Activated CD8-positive, alpha-beta T cell treated with anti-CD3 and anti-CD28 coated beads for 36 hours (primary cell): ENCODE measurements at regions of chr17 and their contacts with region 1.

Region 1: GRCh38 chr17:40909351-40909750 is 24.3 kb upstream of the KRT20 start:
- DNase-seq: peak; percentile 82
- ATAC-seq: peak; percentile 94
- H3K4me3 Mint-ChIP-seq: no peak overlapping the region
- H3K27ac Mint-ChIP-seq: no peak overlapping the region
- H3K4me1 Mint-ChIP-seq: no peaks in the 10 kb centered on the region
- H3K27me3 Mint-ChIP-seq: peaks cover 23% of the 10 kb centered on the region
- CTCF ChIP-seq: peak; percentile 80

Region 2: DNA sequence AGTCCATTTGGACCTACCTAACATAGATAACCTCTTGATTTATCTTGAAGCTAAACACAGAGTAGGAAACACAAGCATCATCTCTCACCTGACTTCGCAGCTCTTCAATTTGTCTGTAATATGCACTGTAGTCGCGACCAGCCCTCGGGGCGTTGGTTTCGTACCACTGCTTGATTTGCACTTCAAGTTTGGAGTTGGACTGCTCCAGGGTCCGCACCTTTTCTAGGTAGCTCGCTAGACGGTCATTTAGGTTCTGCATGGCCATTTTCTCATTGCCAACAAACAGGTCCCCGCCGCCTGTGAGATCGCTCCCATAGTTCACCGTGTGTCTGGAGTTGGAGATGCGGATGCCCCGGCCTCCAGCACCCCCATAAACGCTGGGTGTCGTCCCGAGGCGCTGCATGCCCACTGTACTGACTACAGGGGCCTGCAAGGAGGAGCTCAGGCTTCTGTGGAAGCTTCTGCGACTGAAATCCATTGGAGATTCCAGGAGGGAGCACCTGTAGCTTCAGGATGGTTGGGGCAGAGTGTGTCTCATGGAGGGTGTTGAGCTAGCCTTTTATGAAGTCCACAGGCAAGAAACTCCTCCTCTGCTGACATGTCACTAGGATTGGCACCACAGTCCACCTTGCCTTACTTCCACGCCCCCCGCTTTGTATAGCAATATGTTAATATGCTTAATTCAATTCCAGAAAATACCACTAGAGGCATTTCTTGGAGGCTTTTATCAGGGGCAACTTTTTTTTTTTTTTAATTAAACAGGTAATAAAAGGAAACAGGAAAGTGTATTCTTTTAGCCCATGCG is 24.4 kb before region 1 on chr17 and contains the start of gene KRT20:
- CTCF ChIA-PET with region 1: no interaction called
- POLR2A ChIA-PET with region 1: no interaction called
- intact Hi-C with region 1: no loop called
- DNase-seq: no peak
- ATAC-seq: no peak
- H3K4me3 Mint-ChIP-seq: no peak within 1 kb of the TSS
- H3K27ac Mint-ChIP-seq: no peak within 1 kb of the TSS
- H3K4me1 Mint-ChIP-seq: no peaks in the 10 kb centered on the region
- H3K27me3 Mint-ChIP-seq: peaks cover 29% of the 10 kb centered on the region
- CTCF ChIP-seq: no peak
- total RNA-seq, gene KRT20: not detected

Region 3: DNA sequence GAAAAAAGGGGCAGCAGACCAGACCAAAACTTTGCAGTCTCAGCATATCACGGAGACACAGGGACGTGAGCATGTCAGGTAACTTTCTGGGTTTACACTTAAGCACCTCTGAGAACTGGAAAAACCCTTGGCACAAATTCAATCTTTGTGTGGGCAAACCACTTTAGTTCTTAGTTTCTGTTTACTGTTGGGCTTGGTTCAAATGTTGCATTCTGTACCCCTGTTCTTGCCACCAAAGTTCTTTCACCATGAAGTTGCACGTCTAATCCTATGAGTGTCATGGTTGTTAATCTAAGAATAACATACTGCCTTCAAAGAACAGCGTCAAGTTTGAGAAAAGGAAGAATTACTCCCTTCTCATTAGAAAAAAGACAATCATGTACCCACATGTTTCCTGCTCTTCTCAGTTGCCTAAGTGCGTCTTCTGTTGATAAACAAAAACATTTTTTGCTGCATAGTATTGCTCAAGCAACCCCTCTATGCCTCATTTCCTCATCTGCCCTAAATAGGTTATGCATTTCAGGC is 429.7 kb after region 1 on chr17:
- CTCF ChIA-PET with region 1: no interaction called
- POLR2A ChIA-PET with region 1: no interaction called
- intact Hi-C with region 1: loop called (anchors 5 kb)
- DNase-seq: peak; percentile 52
- ATAC-seq: peak; percentile 65
- H3K4me3 Mint-ChIP-seq: no peak overlapping the region
- H3K27ac Mint-ChIP-seq: peak overlapping the region; percentile 53
- H3K4me1 Mint-ChIP-seq: peaks cover 67% of the 10 kb centered on the region
- H3K27me3 Mint-ChIP-seq: no peaks in the 10 kb centered on the region
- CTCF ChIP-seq: no peak

Region 4: GRCh38 chr17:41635121-41636097 is 726.1 kb after region 1 on chr17:
- CTCF ChIA-PET with region 1: no interaction called
- POLR2A ChIA-PET with region 1: no interaction called
- intact Hi-C with region 1: loop called (anchors 10 kb)
- DNase-seq: no peak
- ATAC-seq: no peak
- H3K4me3 Mint-ChIP-seq: no peak overlapping the region
- H3K27ac Mint-ChIP-seq: no peak overlapping the region
- H3K4me1 Mint-ChIP-seq: no peaks in the 10 kb centered on the region
- H3K27me3 Mint-ChIP-seq: no peaks in the 10 kb centered on the region
- CTCF ChIP-seq: no peak